B cell (primary cell): ENCODE measurements at regions of chr14 and their contacts with region 1.

Region 1: GRCh38 chr14:20970983-20971704 is 15.9 kb downstream of the RNASE2 start:
- DNase-seq: peak; percentile 89
- ATAC-seq: peak; percentile 96
- H3K4me3 ChIP-seq: peak overlapping the region; percentile 62 to 76 (median 68)
- H3K4me3 Mint-ChIP-seq: peak overlapping the region; percentile 96
- H3K27ac ChIP-seq: no peak overlapping the region
- H3K27ac Mint-ChIP-seq: peak overlapping the region; percentile 73
- H3K4me1 ChIP-seq: peaks cover 8 to 14% of the 10 kb centered on the region in 2 donors
- H3K4me1 Mint-ChIP-seq: peaks cover 11% of the 10 kb centered on the region
- H3K27me3 ChIP-seq: peaks cover 0 to 43% (median 10%) of the 10 kb centered on the region in 4 experiments
- H3K27me3 Mint-ChIP-seq: peaks cover 63% of the 10 kb centered on the region
- CTCF ChIP-seq: peak; percentile 94

Region 2: DNA sequence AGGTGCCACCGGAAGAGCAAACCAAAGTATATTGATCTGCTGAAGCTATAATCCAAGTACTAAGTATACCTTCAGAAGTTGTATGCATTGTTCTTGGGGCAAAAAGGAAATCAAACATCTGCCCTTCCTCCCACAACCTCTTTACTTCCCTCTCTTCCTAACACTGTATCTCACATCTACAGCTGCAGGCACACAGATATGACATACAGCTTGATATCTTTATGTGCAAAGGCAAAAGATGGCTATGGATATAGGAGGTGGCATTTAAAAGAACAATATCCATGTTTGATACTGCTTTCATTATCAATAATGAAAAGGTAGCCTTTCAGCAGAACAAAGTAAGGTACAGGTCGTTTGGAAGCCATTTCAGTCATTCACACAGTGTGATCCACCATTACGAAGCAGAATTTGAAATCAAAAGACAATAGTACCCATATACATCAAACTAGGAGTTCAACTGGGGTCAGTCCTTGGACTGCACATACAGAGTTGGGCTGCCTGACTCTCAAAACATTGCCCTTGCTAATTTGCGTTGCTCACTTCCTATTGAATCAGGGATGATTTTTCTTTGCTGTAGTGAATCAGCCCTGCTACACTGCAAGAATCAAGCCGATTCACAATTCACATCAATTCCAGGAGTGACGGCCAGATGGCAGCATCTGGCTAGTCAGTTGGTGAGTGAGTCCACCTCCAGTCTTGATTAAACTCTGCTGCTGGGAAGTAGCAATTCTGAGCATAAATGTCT is 273.7 kb before region 1 on chr14:
- CTCF ChIA-PET with region 1: interaction called, 20 read pairs
- POLR2A ChIA-PET with region 1: no interaction called
- intact Hi-C with region 1: loop called (anchors 1 kb)
- DNase-seq: peak; percentile 81
- ATAC-seq: peak; percentile 86
- H3K4me3 ChIP-seq: no peak overlapping the region
- H3K4me3 Mint-ChIP-seq: no peak overlapping the region
- H3K27ac ChIP-seq: no peak overlapping the region
- H3K27ac Mint-ChIP-seq: no peak overlapping the region
- H3K4me1 ChIP-seq: no peaks in the 10 kb centered on the region
- H3K4me1 Mint-ChIP-seq: peaks cover 6% of the 10 kb centered on the region
- H3K27me3 ChIP-seq: no peaks in the 10 kb centered on the region
- H3K27me3 Mint-ChIP-seq: no peaks in the 10 kb centered on the region
- CTCF ChIP-seq: peak; percentile 88

Region 3: DNA sequence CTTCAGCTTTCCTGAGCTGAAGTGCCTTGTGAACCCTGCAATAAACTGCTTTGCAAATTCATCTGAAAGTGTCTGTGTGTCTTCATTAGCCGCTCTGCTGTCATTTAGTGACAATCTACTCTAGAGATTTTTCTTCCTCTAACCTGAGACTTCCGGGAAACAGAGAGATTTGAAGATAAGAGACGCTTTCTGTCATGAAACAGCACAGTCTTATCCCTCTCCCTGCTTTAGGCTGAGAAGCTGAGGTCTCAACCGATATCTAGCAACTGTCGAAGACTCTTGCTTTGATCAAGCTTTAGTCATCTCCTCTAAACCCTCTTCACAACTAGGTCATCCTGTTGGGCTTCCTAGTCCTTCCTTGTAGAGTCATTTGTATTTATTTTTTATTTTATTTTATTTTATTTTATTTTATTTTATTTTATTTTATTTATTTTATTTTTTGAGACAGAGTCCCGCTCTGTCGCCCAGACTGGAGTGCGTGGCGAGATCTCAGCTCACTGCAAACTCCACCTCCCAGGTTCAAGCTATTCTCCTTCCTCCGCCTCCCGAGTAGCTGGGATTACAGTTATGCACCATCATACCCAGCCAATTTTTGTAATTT is 14.7 kb before region 1 on chr14:
- CTCF ChIA-PET with region 1: interaction called, 67 read pairs
- POLR2A ChIA-PET with region 1: no interaction called
- intact Hi-C with region 1: loop called (anchors 1 kb)
- DNase-seq: no peak
- ATAC-seq: no peak
- H3K4me3 ChIP-seq: no peak overlapping the region
- H3K4me3 Mint-ChIP-seq: no peak overlapping the region
- H3K27ac ChIP-seq: no peak overlapping the region
- H3K27ac Mint-ChIP-seq: no peak overlapping the region
- H3K4me1 ChIP-seq: peaks cover 0 to 2% of the 10 kb centered on the region in 2 donors
- H3K4me1 Mint-ChIP-seq: peaks cover 8% of the 10 kb centered on the region
- H3K27me3 ChIP-seq: peaks cover 0 to 4% (median 3%) of the 10 kb centered on the region in 4 experiments
- H3K27me3 Mint-ChIP-seq: peaks cover 30% of the 10 kb centered on the region
- CTCF ChIP-seq: no peak

Region 4: DNA sequence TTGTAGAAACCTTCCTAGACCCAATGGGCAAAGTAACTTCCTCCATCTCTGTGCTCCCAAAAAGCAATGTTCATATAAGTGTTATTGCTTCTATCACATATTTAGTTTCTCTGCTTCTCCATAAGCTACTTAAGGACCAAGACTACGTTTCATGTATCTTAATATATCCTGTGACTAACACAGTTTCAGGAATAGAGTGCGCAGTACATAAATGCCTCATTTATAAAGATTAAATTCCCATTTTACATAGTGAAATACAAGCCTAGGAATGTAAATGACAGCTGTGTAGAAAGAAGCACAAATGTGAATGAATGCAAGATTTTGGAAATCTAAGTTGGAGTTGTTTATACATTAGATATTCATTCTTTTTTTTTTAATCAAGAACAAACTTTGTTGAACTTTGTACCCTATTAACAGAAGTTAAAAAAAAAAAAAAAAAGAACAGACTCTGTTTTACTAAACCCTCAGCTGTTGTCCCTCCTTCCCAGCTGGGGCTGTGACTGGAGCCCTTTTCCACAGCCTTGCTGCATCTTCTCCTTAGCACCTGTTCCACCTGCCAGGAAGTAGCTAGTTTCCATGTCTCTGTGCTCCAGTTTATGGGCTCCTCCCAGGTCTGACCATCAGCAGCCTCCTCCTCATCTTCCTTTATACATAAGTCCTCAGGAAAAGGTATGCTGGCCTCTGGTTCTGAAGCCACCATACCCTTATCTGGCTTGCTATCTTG is 11.7 kb after region 1 on chr14:
- CTCF ChIA-PET with region 1: interaction called, 51 read pairs
- POLR2A ChIA-PET with region 1: interaction called, 3 read pairs
- intact Hi-C with region 1: no loop called
- DNase-seq: no peak
- ATAC-seq: no peak
- H3K4me3 ChIP-seq: no peak overlapping the region
- H3K4me3 Mint-ChIP-seq: no peak overlapping the region
- H3K27ac ChIP-seq: no peak overlapping the region
- H3K27ac Mint-ChIP-seq: no peak overlapping the region
- H3K4me1 ChIP-seq: no peaks in the 10 kb centered on the region
- H3K4me1 Mint-ChIP-seq: peaks cover 3% of the 10 kb centered on the region
- H3K27me3 ChIP-seq: peaks cover 0 to 6% (median 3%) of the 10 kb centered on the region in 4 experiments
- H3K27me3 Mint-ChIP-seq: peaks cover 20% of the 10 kb centered on the region
- CTCF ChIP-seq: no peak

Region 5: DNA sequence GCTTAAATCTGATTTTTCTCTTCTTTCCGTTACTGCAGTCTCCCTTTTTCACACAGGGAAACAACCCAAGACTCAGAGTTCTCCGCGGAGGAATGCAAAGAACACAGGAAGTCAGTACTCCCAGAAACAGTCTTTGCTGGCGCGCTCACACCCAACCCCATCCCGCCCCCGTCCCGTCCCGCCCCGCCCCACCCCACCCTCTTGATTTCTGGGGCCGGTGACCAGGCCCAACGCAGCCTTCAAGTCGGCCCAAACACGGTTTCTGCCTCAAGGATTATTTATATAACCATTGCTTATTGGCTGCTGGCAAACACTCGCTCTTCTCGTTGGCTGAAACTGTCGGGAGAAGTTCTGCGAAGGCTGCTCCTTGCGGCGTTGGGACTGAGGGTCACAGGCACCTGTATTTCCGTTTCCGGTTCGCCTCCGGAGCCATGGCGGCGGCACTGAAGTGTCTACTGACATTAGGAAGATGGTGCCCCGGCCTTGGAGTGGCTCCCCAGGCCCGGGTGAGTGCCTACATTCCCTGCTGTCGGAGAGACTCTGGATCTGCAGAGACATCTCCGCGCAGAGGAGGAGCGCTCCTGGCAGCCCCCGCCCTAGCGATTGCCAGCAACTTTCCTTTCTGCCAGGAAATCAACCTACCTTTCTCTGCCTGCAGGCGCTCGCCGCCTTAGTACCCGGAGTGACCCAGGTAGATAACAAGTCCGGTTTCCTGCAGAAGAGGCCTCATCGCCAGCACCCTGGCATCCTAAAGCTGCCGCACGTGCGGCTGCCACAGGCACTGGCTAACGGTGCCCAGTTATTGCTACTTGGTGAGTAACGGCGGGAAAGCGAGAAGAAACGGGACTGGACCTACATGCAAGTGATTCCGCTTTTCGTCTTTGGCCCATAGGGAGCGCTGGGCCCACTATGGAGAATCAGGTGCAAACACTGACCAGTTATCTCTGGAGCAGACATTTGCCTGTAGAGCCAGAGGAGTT is 18.7 kb after region 1 on chr14 and contains the start of gene METTL17:
- CTCF ChIA-PET with region 1: interaction called, 51 read pairs
- POLR2A ChIA-PET with region 1: no interaction called
- intact Hi-C with region 1: loop called (anchors 1 kb)
- DNase-seq: peak; percentile 90
- ATAC-seq: peak; percentile 94
- H3K4me3 ChIP-seq: peak within 1 kb of the TSS; percentile 83 to 93 (median 88)
- H3K4me3 Mint-ChIP-seq: peak within 1 kb of the TSS; percentile 91
- H3K27ac ChIP-seq: peak within 1 kb of the TSS; percentile 52 to 64
- H3K27ac Mint-ChIP-seq: peak within 1 kb of the TSS; percentile 92
- H3K4me1 ChIP-seq: peaks cover 13 to 20% of the 10 kb centered on the region in 2 donors
- H3K4me1 Mint-ChIP-seq: peaks cover 21% of the 10 kb centered on the region
- H3K27me3 ChIP-seq: no peaks in the 10 kb centered on the region
- H3K27me3 Mint-ChIP-seq: no peaks in the 10 kb centered on the region
- CTCF ChIP-seq: peak; percentile 28
- total RNA-seq, gene METTL17: 116 and 118 TPM in 2 replicates

Region 6: GRCh38 chr14:20998664-20999366 is 27.7 kb after region 1 on chr14 and contains the start of gene SLC39A2:
- CTCF ChIA-PET with region 1: interaction called, 14 read pairs
- POLR2A ChIA-PET with region 1: no interaction called
- intact Hi-C with region 1: no loop called
- DNase-seq: no peak
- ATAC-seq: no peak
- H3K4me3 ChIP-seq: no peak within 1 kb of the TSS
- H3K4me3 Mint-ChIP-seq: no peak within 1 kb of the TSS
- H3K27ac ChIP-seq: no peak within 1 kb of the TSS
- H3K27ac Mint-ChIP-seq: no peak within 1 kb of the TSS
- H3K4me1 ChIP-seq: no peaks in the 10 kb centered on the region
- H3K4me1 Mint-ChIP-seq: no peaks in the 10 kb centered on the region
- H3K27me3 ChIP-seq: no peaks in the 10 kb centered on the region
- H3K27me3 Mint-ChIP-seq: no peaks in the 10 kb centered on the region
- CTCF ChIP-seq: no peak
- total RNA-seq, gene SLC39A2: 0.25 and 0.51 TPM in 2 replicates

Region 7: DNA sequence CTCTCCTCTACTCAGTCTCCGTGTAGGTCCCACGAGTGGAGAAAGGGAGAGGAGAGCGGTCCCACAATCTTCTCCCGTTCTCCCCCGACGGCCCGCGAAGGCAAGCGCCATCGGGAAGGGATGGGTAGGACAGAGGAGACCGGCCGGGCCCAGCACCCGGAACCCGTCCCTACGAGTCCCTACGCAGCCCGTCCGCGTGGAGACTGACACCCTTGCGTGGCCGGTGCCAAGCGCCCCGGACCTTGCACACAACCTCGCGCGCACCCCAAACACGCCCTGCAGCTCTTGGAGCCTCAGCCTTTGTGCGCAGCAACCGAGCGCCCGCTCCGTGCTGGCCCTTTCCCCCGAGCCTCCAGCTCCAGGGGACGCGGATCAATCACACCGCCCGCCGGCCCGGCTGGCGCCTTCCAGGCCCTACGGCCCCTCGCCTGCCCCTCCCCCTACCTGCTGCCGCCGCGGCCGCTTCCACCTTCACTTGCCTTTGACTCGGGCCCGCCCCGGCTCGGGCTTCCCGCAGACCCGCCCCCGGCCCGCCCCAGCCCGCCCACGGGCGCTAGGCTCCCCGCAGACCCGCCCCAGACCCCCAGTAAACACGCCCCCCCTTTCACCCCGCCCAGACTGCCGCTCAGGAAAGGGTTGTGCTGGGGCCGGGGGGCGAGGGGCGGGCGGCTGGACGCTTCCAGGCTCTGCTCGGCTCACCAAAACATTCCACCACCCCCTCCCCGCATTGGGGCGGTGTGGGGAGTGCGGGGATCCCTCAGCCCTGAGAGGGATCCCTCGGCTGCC is 53.6 kb after region 1 on chr14 and contains the start of gene NDRG2:
- CTCF ChIA-PET with region 1: no interaction called
- POLR2A ChIA-PET with region 1: no interaction called
- intact Hi-C with region 1: loop called (anchors 2 kb)
- DNase-seq: peak; percentile 83
- ATAC-seq: peak; percentile 94
- H3K4me3 ChIP-seq: peak within 1 kb of the TSS; percentile 15 to 86 (median 75)
- H3K4me3 Mint-ChIP-seq: peak within 1 kb of the TSS; percentile 93
- H3K27ac ChIP-seq: no peak within 1 kb of the TSS
- H3K27ac Mint-ChIP-seq: peak within 1 kb of the TSS; percentile 67
- H3K4me1 ChIP-seq: peaks cover 12 to 23% of the 10 kb centered on the region in 2 donors
- H3K4me1 Mint-ChIP-seq: peaks cover 19% of the 10 kb centered on the region
- H3K27me3 ChIP-seq: peaks cover 0 to 30% (median 8%) of the 10 kb centered on the region in 4 experiments
- H3K27me3 Mint-ChIP-seq: peaks cover 16% of the 10 kb centered on the region
- CTCF ChIP-seq: no peak
- total RNA-seq, gene NDRG2: 9.5 and 10.2 TPM in 2 replicates

Region 8: GRCh38 chr14:21092273-21093011 is 121.3 kb after region 1 on chr14:
- CTCF ChIA-PET with region 1: no interaction called
- POLR2A ChIA-PET with region 1: no interaction called
- intact Hi-C with region 1: no loop called
- DNase-seq: peak; percentile 93
- ATAC-seq: peak; percentile 99
- H3K4me3 ChIP-seq: no peak overlapping the region
- H3K4me3 Mint-ChIP-seq: peak overlapping the region; percentile 27
- H3K27ac ChIP-seq: no peak overlapping the region
- H3K27ac Mint-ChIP-seq: peak overlapping the region; percentile 72
- H3K4me1 ChIP-seq: peaks cover 6 to 16% of the 10 kb centered on the region in 2 donors
- H3K4me1 Mint-ChIP-seq: peaks cover 14% of the 10 kb centered on the region
- H3K27me3 ChIP-seq: peaks cover 0 to 4% (median 0%) of the 10 kb centered on the region in 4 experiments
- H3K27me3 Mint-ChIP-seq: no peaks in the 10 kb centered on the region
- CTCF ChIP-seq: peak; percentile 100

Region 9: DNA sequence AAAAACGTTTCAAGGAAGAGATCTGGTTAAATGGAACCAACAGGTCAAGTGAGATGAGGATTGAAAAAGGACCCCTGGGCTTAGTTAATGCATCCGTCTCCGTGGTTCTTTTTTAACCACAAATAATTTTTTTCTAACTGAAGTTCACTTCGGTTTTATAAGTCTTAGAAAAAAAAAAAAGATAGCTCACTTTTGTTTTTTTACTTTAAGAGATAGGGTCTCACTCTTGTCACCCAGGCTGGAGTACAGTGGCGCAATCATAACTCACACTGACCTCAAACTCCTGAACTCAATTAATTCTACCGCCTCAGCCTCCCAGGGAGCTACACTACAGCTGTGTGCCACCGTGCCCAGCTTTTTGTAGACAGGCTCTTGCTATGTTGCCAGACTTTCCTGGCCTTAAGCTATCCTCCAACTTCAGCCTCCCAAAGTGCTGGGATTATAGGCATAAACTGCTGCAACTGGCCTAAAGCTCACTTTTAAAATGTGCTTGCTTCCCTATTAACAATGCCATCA is 286.3 kb after region 1 on chr14:
- CTCF ChIA-PET with region 1: no interaction called
- POLR2A ChIA-PET with region 1: no interaction called
- intact Hi-C with region 1: no loop called
- DNase-seq: no peak
- ATAC-seq: no peak
- H3K4me3 ChIP-seq: no peak overlapping the region
- H3K4me3 Mint-ChIP-seq: peak overlapping the region; percentile 51
- H3K27ac ChIP-seq: peak overlapping the region in 1 of 2 donors; percentile 44
- H3K27ac Mint-ChIP-seq: peak overlapping the region; percentile 62
- H3K4me1 ChIP-seq: peaks cover 25 to 32% of the 10 kb centered on the region in 2 donors
- H3K4me1 Mint-ChIP-seq: peaks cover 60% of the 10 kb centered on the region
- H3K27me3 ChIP-seq: no peaks in the 10 kb centered on the region
- H3K27me3 Mint-ChIP-seq: no peaks in the 10 kb centered on the region
- CTCF ChIP-seq: no peak

Region 10: DNA sequence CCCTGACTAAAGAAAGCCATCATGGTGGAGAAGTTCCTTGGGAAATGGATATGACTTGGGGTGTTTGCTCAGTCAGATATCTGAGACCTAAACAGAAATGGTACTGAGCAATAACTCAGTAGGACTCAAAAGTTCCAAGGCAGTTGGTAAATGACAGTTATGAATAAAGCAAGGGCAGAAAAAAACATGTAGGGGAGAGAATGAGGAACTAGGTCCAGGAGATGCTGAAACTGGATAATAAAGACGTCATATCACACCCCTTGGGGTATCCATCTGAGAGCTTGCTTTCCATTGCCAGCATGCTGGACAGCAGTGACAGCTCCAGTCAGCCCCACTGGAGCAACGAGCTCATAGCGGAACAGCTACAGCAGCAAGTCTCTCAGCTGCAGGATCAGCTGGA is 346.3 kb after region 1 on chr14:
- CTCF ChIA-PET with region 1: no interaction called
- POLR2A ChIA-PET with region 1: no interaction called
- intact Hi-C with region 1: no loop called
- DNase-seq: peak; percentile 73
- ATAC-seq: peak; percentile 80
- H3K4me3 ChIP-seq: no peak overlapping the region
- H3K4me3 Mint-ChIP-seq: peak overlapping the region; percentile 38
- H3K27ac ChIP-seq: peak overlapping the region in 1 of 2 donors; percentile 72
- H3K27ac Mint-ChIP-seq: peak overlapping the region; percentile 81
- H3K4me1 ChIP-seq: peaks cover 16 to 34% of the 10 kb centered on the region in 2 donors
- H3K4me1 Mint-ChIP-seq: peaks cover 21% of the 10 kb centered on the region
- H3K27me3 ChIP-seq: no peaks in the 10 kb centered on the region
- H3K27me3 Mint-ChIP-seq: peaks cover under 1% of the 10 kb centered on the region
- CTCF ChIP-seq: no peak

Region 11: DNA sequence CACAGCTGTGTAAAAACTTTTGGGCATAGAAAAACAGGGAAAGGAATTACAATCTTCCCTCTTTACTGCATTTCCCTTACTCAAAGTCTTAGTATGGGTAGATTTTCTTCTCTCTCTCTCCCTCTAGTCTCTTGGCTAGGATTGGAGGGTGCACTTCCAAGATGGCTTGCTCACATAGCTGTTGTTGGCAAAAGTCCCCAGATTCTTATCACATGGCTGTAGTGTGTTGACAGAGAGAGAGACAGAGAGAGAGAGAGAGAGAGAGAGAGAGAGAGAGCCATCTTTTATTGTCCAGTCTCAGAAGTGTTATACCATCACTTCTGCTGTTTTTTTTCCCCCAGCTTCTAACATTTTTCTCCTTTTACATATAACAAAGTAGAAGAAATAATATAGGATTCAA is 676.2 kb after region 1 on chr14:
- CTCF ChIA-PET with region 1: no interaction called
- POLR2A ChIA-PET with region 1: no interaction called
- intact Hi-C with region 1: no loop called
- DNase-seq: no peak
- ATAC-seq: no peak
- H3K4me3 ChIP-seq: no peak overlapping the region
- H3K4me3 Mint-ChIP-seq: no peak overlapping the region
- H3K27ac ChIP-seq: no peak overlapping the region
- H3K27ac Mint-ChIP-seq: no peak overlapping the region
- H3K4me1 ChIP-seq: no peaks in the 10 kb centered on the region
- H3K4me1 Mint-ChIP-seq: no peaks in the 10 kb centered on the region
- H3K27me3 ChIP-seq: peaks cover 0 to 5% (median 2%) of the 10 kb centered on the region in 4 experiments
- H3K27me3 Mint-ChIP-seq: peaks cover 12% of the 10 kb centered on the region
- CTCF ChIP-seq: no peak